Activated CD4-positive, alpha-beta T cell treated with anti-CD3 and anti-CD28 coated beads for 36 hours (primary cell): ENCODE measurements at regions of chr6 and their contacts with region 1.

Region 1: GRCh38 chr6:106512048-106512967 is 117.0 kb downstream of the RTN4IP1 start:
- DNase-seq: peak; percentile 89
- ATAC-seq: peak; percentile 61
- H3K4me3 Mint-ChIP-seq: peak overlapping the region; percentile 87
- H3K27ac Mint-ChIP-seq: peak overlapping the region; percentile 93
- H3K4me1 Mint-ChIP-seq: peaks cover 50% of the 10 kb centered on the region
- H3K27me3 Mint-ChIP-seq: peaks cover 5% of the 10 kb centered on the region

Region 2: GRCh38 chr6:105992315-105992961 is 519.9 kb before region 1 on chr6:
- CTCF ChIA-PET with region 1: no interaction called
- POLR2A ChIA-PET with region 1: no interaction called
- intact Hi-C with region 1: loop called in 1 of 2 experiments (anchors 10 kb)
- DNase-seq: peak; percentile 94
- ATAC-seq: peak; percentile 93
- H3K4me3 Mint-ChIP-seq: peak overlapping the region; percentile 88
- H3K27ac Mint-ChIP-seq: peak overlapping the region; percentile 91
- H3K4me1 Mint-ChIP-seq: peaks cover 32% of the 10 kb centered on the region
- H3K27me3 Mint-ChIP-seq: peaks cover 61% of the 10 kb centered on the region

Region 3: GRCh38 chr6:106444777-106445507 is 67.4 kb before region 1 on chr6:
- CTCF ChIA-PET with region 1: interaction called, 7 read pairs
- POLR2A ChIA-PET with region 1: no interaction called
- intact Hi-C with region 1: loop called (anchors 2 kb)
- DNase-seq: no peak
- ATAC-seq: peak; percentile 88
- H3K4me3 Mint-ChIP-seq: no peak overlapping the region
- H3K27ac Mint-ChIP-seq: no peak overlapping the region
- H3K4me1 Mint-ChIP-seq: peaks cover 19% of the 10 kb centered on the region
- H3K27me3 Mint-ChIP-seq: peaks cover 25% of the 10 kb centered on the region

Region 4: DNA sequence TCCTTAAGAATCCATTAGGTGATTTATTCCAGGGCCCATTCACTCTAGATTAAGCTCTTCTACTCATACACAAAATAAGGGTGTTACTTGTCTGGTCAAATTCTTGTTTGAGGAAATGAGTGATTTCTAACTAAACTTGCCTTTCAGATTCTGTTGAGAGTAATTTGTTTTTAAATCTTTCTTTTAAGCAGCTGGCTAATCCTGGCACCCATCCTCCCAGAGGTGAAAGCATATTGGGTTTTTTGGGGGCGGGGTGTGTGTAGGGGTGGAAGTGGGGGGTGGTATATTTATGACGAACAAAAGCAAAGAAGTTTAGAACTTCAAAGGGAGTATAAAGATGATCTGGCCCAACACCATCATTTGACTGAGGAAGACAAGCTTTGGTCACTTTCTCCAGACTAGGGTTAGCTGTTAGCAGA is 22.3 kb after region 1 on chr6:
- CTCF ChIA-PET with region 1: interaction called, 10 read pairs
- POLR2A ChIA-PET with region 1: interaction called, 5 read pairs
- intact Hi-C with region 1: loop called in 1 of 2 experiments (anchors 2 kb)
- DNase-seq: peak; percentile 72
- ATAC-seq: peak; percentile 79
- H3K4me3 Mint-ChIP-seq: no peak overlapping the region
- H3K27ac Mint-ChIP-seq: peak overlapping the region; percentile 78
- H3K4me1 Mint-ChIP-seq: peaks cover 80% of the 10 kb centered on the region
- H3K27me3 Mint-ChIP-seq: no peaks in the 10 kb centered on the region

Region 5: DNA sequence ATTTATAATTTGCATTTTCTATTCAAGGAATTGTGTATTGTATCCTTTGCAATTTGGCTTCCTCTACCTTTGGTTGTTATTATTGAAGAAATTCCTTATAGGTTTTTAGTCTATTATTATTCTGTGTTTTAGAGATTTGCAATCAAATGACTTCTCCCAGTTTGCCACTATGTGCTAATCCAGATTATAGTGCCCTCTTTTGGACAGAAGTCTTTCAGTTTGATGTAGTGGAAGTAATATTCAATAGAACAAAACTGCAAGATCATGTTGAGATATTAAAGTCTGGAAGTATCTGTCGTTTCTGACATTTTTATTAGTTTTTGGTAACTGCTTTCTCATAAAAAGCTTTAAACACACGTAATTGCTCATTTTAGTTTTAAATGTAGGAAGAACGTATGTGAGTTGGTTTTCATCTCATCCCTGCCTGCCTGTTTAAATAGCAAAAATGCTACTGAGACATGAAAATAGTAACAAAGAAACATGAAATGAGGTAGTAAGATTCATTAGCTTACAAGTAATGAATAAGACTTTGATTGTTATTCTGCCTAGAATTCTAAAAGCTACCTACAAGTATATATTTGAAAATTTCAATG is 44.2 kb after region 1 on chr6:
- CTCF ChIA-PET with region 1: interaction called, 23 read pairs
- POLR2A ChIA-PET with region 1: no interaction called
- intact Hi-C with region 1: loop called (anchors 1 to 5 kb)
- DNase-seq: no peak
- ATAC-seq: no peak
- H3K4me3 Mint-ChIP-seq: no peak overlapping the region
- H3K27ac Mint-ChIP-seq: peak overlapping the region; percentile 13
- H3K4me1 Mint-ChIP-seq: peaks cover 31% of the 10 kb centered on the region
- H3K27me3 Mint-ChIP-seq: no peaks in the 10 kb centered on the region

Region 6: DNA sequence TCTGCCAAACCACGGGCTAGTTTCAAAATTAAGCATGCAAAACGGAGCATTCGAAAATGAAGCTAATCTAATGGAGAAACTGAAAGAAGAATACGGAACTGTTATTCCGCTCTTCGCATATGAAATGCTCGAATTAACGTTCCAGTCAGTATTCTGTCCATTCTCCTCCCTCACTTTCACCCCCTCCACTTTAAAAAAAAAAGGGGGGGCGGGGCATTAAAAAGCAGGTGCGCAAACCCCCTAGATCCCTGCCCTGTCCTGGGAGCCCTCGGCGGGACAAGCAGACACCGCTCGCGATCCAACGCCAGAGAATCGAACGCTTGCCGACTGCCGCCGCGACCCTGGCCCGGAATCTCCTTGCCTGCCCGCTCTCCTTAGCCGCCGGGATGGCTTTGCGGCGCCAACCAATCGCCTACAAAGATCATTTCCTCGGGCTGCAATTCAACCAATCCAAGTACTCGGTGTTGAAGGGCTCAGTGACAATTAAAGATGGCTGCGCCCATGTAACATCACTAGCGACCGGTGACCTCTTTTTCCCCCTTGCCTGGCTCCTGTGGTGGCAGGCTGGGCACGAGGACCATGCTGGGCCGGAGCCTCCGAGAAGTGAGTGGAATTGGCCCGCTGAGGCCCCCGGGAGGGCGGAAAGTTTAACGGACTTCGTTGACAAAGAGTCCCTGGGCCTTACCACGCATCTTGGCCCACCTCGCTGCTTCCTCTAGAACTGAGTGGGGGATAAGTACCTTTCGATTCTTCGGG is 117.0 kb after region 1 on chr6 and contains the starts of genes QRSL1 and RTN4IP1:
- CTCF ChIA-PET with region 1: no interaction called
- POLR2A ChIA-PET with region 1: no interaction called
- intact Hi-C with region 1: loop called in 1 of 2 experiments (anchors 5 kb)
- DNase-seq: peak; percentile 90
- ATAC-seq: peak; percentile 91
- H3K4me3 Mint-ChIP-seq: peak within 1 kb of the TSS; percentile 97
- H3K27ac Mint-ChIP-seq: peak within 1 kb of the TSS; percentile 98
- H3K4me1 Mint-ChIP-seq: peaks cover 28% of the 10 kb centered on the region
- H3K27me3 Mint-ChIP-seq: no peaks in the 10 kb centered on the region
- total RNA-seq, gene QRSL1: 15.8 to 17.9 TPM
- total RNA-seq, gene RTN4IP1: 4.8 to 9.3 TPM